CD14-positive monocyte (primary cell): ENCODE measurements at regions of chr11 and their contacts with region 1.

Region 1: GRCh38 chr11:96054870-96055705 is 131.2 kb upstream of the MTMR2 start:
- DNase-seq: peak; percentile 8 to 27 (median 20)
- H3K4me3 ChIP-seq: no peak overlapping the region
- H3K4me3 Mint-ChIP-seq: no peak overlapping the region
- H3K27ac ChIP-seq: no peak overlapping the region
- H3K27ac Mint-ChIP-seq: peak overlapping the region in 1 of 7 donors; percentile 23
- H3K4me1 ChIP-seq: peaks cover 11 to 13% of the 10 kb centered on the region in 2 donors
- H3K4me1 Mint-ChIP-seq: peaks cover 12% of the 10 kb centered on the region
- H3K27me3 ChIP-seq: no peaks in the 10 kb centered on the region
- H3K27me3 Mint-ChIP-seq: no peaks in the 10 kb centered on the region
- CTCF ChIP-seq: peak; percentile 67

Region 2: GRCh38 chr11:95877291-95877690 is 177.8 kb before region 1 on chr11:
- intact Hi-C with region 1: no loop called
- DNase-seq: no peak
- H3K4me3 ChIP-seq: no peak overlapping the region
- H3K4me3 Mint-ChIP-seq: no peak overlapping the region
- H3K27ac ChIP-seq: no peak overlapping the region
- H3K27ac Mint-ChIP-seq: no peak overlapping the region
- H3K4me1 ChIP-seq: no peaks in the 10 kb centered on the region
- H3K4me1 Mint-ChIP-seq: no peaks in the 10 kb centered on the region
- H3K27me3 ChIP-seq: no peaks in the 10 kb centered on the region
- H3K27me3 Mint-ChIP-seq: peaks cover 0 to 2% (median 0%) of the 10 kb centered on the region in 3 donors
- CTCF ChIP-seq: no peak

Region 3: DNA sequence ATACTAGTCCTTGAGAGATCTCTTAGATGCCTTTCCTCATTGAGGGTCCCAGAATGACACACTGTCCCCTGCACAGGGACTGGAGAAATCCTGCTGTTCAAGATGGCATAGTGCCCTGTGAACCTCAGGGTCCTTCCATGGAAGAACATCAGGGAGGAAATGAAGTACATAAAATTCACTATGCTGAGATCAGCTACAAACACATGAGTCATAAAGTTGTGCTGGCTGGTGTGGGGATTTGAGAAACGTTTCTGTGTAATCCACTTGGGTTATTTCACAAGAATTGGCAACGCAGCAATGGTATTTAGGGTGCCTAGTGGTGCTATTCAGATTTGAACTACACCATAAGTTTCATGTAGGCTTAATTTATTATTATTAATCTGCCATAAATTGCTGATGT is 113.5 kb after region 1 on chr11:
- intact Hi-C with region 1: loop called in 1 of 2 experiments (anchors 10 kb)
- DNase-seq: peak; percentile 84 to 94 (median 94)
- H3K4me3 ChIP-seq: peak overlapping the region in 1 of 3 experiments; percentile 22
- H3K4me3 Mint-ChIP-seq: no peak overlapping the region
- H3K27ac ChIP-seq: peak overlapping the region; percentile 16 to 78
- H3K27ac Mint-ChIP-seq: peak overlapping the region; percentile 85 to 96 (median 91)
- H3K4me1 ChIP-seq: peaks cover 37% of the 10 kb centered on the region in 2 donors
- H3K4me1 Mint-ChIP-seq: peaks cover 43% of the 10 kb centered on the region
- H3K27me3 ChIP-seq: no peaks in the 10 kb centered on the region
- H3K27me3 Mint-ChIP-seq: peaks cover 0 to 4% (median 3%) of the 10 kb centered on the region in 3 donors
- CTCF ChIP-seq: no peak